HEK293 (cell line): ENCODE measurements at regions of chr4 and their contacts with region 1.

Region 1: DNA sequence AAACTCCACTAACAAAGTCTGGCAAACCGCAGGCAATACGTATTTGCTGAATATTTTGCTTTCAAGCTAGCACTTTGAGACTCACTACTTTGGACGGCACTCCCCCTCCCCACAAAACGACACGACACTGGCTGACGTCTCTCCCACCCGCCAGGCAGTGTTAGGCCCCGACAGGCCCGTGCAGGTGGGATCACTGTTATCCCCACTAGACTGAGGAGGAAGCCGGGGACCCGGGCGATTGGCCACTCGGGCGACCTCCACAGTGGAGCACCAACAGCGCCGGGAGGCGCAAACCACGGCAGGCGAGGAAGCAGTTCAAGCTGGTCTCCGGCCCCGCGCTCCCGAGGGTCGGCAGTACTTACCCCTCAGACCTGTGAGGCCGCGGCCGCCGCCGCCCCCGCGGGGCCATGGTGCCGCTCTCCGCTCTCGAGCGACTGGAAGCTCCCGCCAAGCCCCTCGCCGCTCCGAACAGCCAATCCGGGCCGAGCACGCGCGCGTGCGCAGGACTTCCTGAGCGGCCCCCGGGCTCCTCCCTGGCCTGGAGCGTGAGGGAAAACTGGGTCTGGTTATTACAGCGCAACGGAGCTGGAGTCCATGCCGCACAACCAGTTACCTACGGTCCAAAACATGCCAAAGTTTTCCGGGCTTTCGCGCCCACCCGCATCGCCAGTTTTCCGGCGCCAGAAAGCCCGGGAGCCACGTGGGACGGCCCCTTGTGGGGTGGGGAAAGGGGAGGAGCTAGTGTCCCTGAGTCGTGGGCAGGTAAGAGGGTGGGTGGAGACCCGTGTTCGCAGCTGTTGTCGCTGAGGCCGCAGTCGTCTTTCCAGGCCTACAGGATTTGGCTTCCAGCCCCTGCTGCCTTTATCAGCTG is at the start of gene CENPU:
- H3K4me3 ChIP-seq: peak within 1 kb of the TSS; percentile 82
- H3K27ac ChIP-seq: peak within 1 kb of the TSS; percentile 93
- H3K4me1 ChIP-seq: 0 out of 2 replicates have a peak, but pooled peaks cover 2% of the 10 kb centered on the region
- CTCF ChIP-seq: 0 out of 2 replicates have a peak, but pooled peaks have one; percentile 22

Region 2: DNA sequence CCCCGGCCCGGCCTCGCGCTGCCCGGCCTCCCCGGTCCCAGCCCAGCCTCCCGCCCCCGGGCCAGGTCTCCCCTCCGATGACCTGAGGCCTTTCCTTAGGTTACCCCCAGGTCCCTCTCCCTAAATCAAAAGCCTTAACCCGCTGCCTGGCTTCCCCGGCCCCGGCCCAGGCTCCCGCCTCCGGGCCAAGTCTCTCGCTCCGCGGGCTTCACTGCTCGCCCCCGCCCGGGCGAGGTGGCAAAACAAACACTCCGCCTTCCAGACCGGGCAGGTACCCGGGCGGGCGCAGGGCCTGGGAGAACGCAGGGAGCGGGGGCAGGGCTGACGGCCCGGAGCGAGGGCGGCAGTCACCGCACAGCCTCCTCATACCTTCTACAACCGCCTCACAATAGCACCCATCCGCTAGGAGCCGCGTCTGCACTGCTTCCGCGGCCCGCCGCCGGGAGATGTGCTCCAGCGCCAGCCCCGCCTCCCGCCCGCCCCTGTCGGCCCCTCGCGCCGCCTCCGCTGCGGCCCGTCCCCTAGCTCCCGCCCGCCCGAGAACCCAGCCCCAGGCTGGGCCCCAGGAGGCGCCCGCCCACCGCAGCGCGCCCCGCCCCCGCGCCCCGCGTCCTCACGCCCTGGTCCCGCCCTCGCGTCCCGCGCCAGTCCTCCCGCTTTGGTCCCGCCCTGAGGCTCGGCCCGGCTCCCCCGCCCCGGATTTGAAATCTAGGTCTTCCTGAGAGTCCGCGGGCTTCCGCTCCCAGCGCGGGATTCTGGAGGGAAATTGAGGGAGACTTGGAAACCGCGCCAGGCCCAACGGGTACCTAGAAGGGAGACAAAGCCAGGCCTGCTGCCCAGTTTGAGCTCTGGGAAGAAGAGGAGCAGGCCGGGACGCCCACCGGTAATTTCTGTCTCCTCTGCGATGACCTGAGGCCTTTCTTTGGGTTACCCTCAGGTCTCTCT is 84.6 kb before region 1 on chr4 and contains the starts of genes CASP3 and PRIMPOL:
- CTCF ChIA-PET with region 1: no interaction called
- POLR2A ChIA-PET with region 1: interaction called, 21 read pairs
- H3K4me3 ChIP-seq: peak within 1 kb of the TSS; percentile 82
- H3K27ac ChIP-seq: peak within 1 kb of the TSS; percentile 91
- H3K4me1 ChIP-seq: peaks cover 18% of the 10 kb centered on the region
- CTCF ChIP-seq: peak; percentile 49; the same call in 1 of the 2 replicates

Region 3: DNA sequence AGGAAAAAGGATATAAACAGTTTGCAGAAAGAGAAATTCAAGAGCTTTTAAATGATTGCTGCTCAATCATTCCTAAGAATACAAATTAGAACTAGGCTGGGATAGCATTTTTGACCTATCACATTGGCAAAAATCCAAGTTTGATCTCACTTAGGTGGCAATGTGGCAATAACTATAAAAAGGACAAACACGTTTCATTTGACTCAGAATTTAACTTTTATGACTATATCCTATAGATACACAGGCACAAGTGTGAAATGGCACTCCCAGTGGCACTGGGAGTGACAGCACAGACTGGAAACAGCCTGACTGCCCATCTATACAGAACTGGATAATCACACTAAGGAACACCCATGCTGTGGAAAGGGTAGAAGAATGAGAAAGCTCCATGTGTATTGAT is 11.1 kb before region 1 on chr4:
- CTCF ChIA-PET with region 1: interaction called, 3 read pairs
- POLR2A ChIA-PET with region 1: interaction called, 24 read pairs
- H3K4me3 ChIP-seq: no peak overlapping the region
- H3K27ac ChIP-seq: no peak overlapping the region
- H3K4me1 ChIP-seq: no peaks in the 10 kb centered on the region
- CTCF ChIP-seq: no peak

Region 4: GRCh38 chr4:184851200-184851541 is 117.3 kb after region 1 on chr4:
- CTCF ChIA-PET with region 1: no interaction called
- POLR2A ChIA-PET with region 1: no interaction called
- H3K4me3 ChIP-seq: no peak overlapping the region
- H3K27ac ChIP-seq: no peak overlapping the region
- H3K4me1 ChIP-seq: no peaks in the 10 kb centered on the region
- CTCF ChIP-seq: no peak